ENCODE measurements at regions of chr4 and their contacts with region 1.

Region 1: DNA sequence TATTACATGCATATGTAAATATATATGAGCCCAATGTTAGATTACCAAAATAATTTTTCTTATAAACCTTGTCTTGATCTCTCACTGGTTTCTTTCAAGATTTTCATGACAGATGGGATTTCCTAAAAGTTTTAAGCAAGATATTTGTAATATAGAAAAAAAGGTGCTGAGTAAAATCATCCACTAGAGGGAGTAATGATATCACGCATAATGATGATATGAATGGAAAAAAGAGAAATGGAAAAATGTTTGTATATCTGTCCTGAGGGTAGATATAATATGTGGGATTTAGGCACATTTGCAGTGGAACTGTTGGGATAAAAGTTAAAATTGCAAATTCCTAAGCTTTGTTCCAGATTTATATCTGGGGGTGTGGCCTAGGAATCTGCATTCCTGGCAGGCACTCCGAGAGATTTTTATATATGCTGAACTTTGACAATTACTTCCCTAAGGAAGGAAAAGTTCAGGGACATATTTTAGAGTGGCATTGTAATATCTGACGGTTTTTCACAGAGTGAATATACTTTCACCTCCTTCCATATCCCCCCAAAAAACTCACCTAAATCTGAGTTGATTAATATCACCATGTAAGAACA is 60.5 kb downstream of the TMA16 start:
- DNase-seq: no peak
- ATAC-seq: no peak
- H3K4me3 ChIP-seq: no peak overlapping the region
- H3K27ac ChIP-seq: no peak overlapping the region
- H3K4me1 ChIP-seq: peaks cover 0 to 46% (median 6%) of the 10 kb centered on the region in 12 donors
- H3K27me3 ChIP-seq: no peaks in the 10 kb centered on the region
- CTCF ChIP-seq: peak; percentile 47 to 75 (median 64)
- POLR2A ChIP-seq: no peak

Region 2: DNA sequence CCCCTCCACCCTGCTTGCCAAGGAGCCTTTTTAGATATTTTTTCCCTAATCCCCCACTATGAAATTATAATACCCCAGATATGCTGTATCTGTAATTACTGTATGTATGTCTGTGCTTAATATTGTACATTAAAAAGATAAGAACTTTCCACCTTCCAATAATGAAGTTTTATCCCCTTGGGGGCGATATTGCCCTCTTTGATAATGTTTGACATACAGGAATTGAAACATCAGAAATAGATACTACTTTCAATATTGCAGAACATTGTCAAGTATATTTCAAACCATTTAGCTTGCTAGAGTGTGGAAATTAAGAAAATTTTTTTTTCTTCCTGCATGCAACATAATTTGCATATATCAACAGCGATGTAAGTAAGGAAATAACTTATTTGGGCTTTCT is 447.2 kb before region 1 on chr4:
- intact Hi-C with region 1: no loop called
- DNase-seq: no peak
- ATAC-seq: no peak
- H3K4me3 ChIP-seq: no peak overlapping the region
- H3K27ac ChIP-seq: no peak overlapping the region
- H3K4me1 ChIP-seq: peaks cover 0 to 8% (median 0%) of the 10 kb centered on the region in 12 donors
- H3K27me3 ChIP-seq: no peaks in the 10 kb centered on the region
- CTCF ChIP-seq: peak in 2 of 12 donors; percentile 16 to 21
- POLR2A ChIP-seq: no peak

Region 3: GRCh38 chr4:163651761-163652160 is 96.8 kb after region 1 on chr4:
- intact Hi-C with region 1: no loop called
- DNase-seq: peak in 1 of 5 donors; percentile 20
- ATAC-seq: peak in 1 of 4 donors; percentile 31
- H3K4me3 ChIP-seq: no peak overlapping the region
- H3K27ac ChIP-seq: no peak overlapping the region
- H3K4me1 ChIP-seq: no peaks in the 10 kb centered on the region
- H3K27me3 ChIP-seq: no peaks in the 10 kb centered on the region
- CTCF ChIP-seq: no peak
- POLR2A ChIP-seq: no peak

Region 4: DNA sequence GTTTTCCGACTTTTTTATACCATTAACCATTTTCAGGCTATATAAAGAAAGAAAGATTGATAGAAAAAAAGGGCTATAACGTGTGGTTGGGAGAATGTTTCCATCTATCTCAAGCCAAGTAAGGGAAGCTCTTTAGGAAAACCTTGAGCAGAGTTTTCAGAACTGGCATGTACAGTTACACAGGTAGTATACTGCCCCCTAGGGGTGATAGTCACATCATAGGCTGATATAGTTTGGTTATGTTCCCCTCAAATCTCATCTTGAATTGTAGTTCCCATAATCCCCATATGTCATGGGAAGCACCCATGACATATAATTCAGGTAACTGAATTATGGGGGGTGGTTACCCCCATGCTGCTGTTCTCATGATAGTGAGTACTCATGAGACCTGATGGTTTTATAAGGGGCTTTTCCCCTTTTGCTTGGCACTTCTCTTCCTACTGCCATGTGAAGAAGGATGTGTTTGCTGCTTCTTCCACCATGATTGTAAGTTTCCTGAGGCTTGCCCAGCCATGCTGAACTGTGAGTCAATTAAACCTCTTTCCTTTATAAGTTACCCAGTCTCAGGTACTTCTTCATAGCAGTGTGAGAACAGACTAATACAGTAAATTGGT is 126.3 kb after region 1 on chr4:
- intact Hi-C with region 1: loop called in 5 of 10 experiments (anchors 2 to 5 kb)
- DNase-seq: no peak
- ATAC-seq: no peak
- H3K4me3 ChIP-seq: no peak overlapping the region
- H3K27ac ChIP-seq: no peak overlapping the region
- H3K4me1 ChIP-seq: no peaks in the 10 kb centered on the region
- H3K27me3 ChIP-seq: no peaks in the 10 kb centered on the region
- CTCF ChIP-seq: peak; percentile 23 to 66 (median 48)
- POLR2A ChIP-seq: no peak

Region 5: GRCh38 chr4:164012396-164013027 is 457.5 kb after region 1 on chr4:
- intact Hi-C with region 1: loop called in 1 of 10 experiments (anchors 10 kb)
- DNase-seq: no peak
- ATAC-seq: no peak
- H3K4me3 ChIP-seq: no peak overlapping the region
- H3K27ac ChIP-seq: no peak overlapping the region
- H3K4me1 ChIP-seq: no peaks in the 10 kb centered on the region
- H3K27me3 ChIP-seq: no peaks in the 10 kb centered on the region
- CTCF ChIP-seq: peak in 1 of 12 donors; percentile 7
- POLR2A ChIP-seq: no peak

Region 6: GRCh38 chr4:164731827-164732474 is 1177.0 kb after region 1 on chr4:
- intact Hi-C with region 1: loop called (anchors 1 to 10 kb)
- DNase-seq: peak in 4 of 5 donors; percentile 11 to 42 (median 31)
- ATAC-seq: peak; percentile 57 to 74 (median 63)
- H3K4me3 ChIP-seq: no peak overlapping the region
- H3K27ac ChIP-seq: no peak overlapping the region
- H3K4me1 ChIP-seq: no peaks in the 10 kb centered on the region
- H3K27me3 ChIP-seq: no peaks in the 10 kb centered on the region
- CTCF ChIP-seq: peak; percentile 59 to 78 (median 74)
- POLR2A ChIP-seq: no peak

Region 7: GRCh38 chr4:164748375-164748774 is 1193.4 kb after region 1 on chr4:
- intact Hi-C with region 1: loop called in 1 of 10 experiments (anchors 5 kb)
- DNase-seq: no peak
- ATAC-seq: no peak
- H3K4me3 ChIP-seq: no peak overlapping the region
- H3K27ac ChIP-seq: no peak overlapping the region
- H3K4me1 ChIP-seq: no peaks in the 10 kb centered on the region
- H3K27me3 ChIP-seq: peaks cover 0 to 4% (median 0%) of the 10 kb centered on the region in 9 donors
- CTCF ChIP-seq: peak in 9 of 12 donors; percentile 12 to 49 (median 37)
- POLR2A ChIP-seq: no peak

Region 8: GRCh38 chr4:165096776-165097175 is 1541.8 kb after region 1 on chr4:
- intact Hi-C with region 1: loop called in 1 of 10 experiments (anchors 5 kb)
- DNase-seq: no peak
- ATAC-seq: no peak
- H3K4me3 ChIP-seq: no peak overlapping the region
- H3K27ac ChIP-seq: no peak overlapping the region
- H3K4me1 ChIP-seq: no peaks in the 10 kb centered on the region
- H3K27me3 ChIP-seq: no peaks in the 10 kb centered on the region
- CTCF ChIP-seq: peak in 11 of 12 donors; percentile 22 to 54 (median 46)
- POLR2A ChIP-seq: no peak

Measured in heart left ventricle (tissue), 16 donors.